ENCODE measurements at regions of chr20 and their contacts with region 1.

Region 1: DNA sequence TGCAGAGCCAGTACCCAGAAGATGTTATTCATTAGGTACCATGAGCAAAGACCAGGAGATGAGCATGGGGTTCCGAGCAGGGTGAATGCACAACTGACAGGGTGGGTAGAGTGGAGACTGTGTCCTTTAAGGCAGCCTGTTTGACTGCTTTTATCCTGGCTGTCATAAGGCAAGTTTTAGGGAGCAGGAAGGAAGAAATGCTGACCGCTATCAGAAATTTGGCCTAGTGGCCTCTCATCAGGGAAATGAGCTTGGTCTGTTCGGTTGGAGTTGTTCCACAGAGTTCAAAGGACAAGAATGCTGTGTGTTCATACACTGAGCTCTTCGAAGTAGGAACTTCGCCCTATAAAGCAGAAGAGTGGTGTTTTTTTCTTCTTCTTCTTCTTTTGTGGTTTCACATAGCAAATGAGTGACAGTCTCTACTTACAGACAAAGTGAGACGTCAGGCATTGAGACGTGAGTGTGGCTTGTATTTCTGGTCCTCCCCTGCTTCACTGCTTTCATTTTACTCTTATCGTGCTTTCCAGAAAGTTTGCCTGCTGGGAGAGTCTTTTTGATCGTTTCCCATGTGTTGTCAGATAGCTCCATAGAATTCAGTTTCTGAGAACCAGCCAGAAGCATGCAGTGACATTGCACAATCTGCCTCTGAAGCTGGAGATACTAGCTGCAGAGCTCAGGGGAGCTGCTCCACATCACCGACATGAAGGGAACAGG is at the start of gene CASS4:
- DNase-seq: peak in 23 of 35 experiments; percentile 19 to 75 (median 34)
- ATAC-seq: peak; percentile 79 to 90 (median 82)
- H3K4me3 ChIP-seq: peak within 1 kb of the TSS; percentile 48 to 57
- H3K4me3 Mint-ChIP-seq: peak within 1 kb of the TSS; percentile 80 to 90 (median 88)
- H3K27ac ChIP-seq: peak within 1 kb of the TSS; percentile 87
- H3K27ac Mint-ChIP-seq: peak within 1 kb of the TSS; percentile 92 to 93
- H3K4me1 ChIP-seq: peaks cover 25 to 38% of the 10 kb centered on the region in 2 experiments
- H3K4me1 Mint-ChIP-seq: peaks cover 55 to 64% (median 59%) of the 10 kb centered on the region in 3 donors
- H3K27me3 ChIP-seq: no peaks in the 10 kb centered on the region
- H3K27me3 Mint-ChIP-seq: no peaks in the 10 kb centered on the region
- total RNA-seq, gene CASS4: 8.0 to 13.8 (median 11.2) TPM

Region 2: DNA sequence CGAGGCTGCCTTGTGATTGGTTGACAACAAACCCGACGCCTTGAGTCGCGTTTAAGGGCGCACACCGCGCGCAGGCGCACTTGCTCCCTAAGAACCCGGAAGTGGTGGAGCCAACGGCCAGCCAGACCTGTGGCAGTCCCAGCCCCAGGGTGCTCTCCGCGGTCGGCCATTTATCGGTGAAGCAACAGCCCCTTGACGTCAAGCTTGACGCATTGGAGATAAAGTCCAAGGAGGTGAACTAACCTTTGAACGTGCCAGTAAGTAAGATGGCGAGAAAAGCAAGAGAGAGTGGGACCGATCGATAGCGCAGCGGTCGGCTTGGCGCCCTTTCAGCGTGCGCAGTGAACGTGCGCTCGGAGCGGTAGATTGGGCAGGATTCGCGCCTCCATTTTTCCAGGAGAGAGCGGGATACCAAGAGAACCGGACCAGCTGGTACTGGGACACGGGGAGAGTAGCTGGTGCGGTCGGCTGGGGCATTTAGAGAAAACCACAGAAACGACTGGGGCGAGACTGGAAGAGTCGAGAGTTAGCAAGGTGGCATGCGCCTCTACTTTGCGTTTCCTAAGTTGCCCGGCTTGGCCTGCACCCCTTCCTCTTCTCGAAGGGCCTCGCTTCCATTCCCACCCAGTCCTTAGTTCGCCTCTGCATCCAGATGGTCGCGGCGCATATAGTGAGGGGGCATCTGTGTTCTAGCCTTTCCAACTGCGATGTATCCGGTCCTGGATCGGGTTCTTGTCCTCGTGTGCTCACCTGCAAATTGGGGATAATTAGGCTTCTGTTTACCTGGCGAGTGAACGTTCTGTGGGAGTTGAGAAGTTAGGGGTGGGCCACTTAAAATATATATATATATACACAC is 19.4 kb before region 1 on chr20 and contains the start of gene CSTF1:
- CTCF ChIA-PET with region 1: interaction called in 1 of 2 experiments, 10 read pairs
- POLR2A ChIA-PET with region 1: interaction called, 9 to 12 read pairs
- DNase-seq: peak; percentile 98 to 100 (median 99)
- ATAC-seq: peak; percentile 87 to 91 (median 90)
- H3K4me3 ChIP-seq: peak within 1 kb of the TSS; percentile 66 to 97
- H3K4me3 Mint-ChIP-seq: no peak within 1 kb of the TSS
- H3K27ac ChIP-seq: peak within 1 kb of the TSS; percentile 89
- H3K27ac Mint-ChIP-seq: no peak within 1 kb of the TSS
- H3K4me1 ChIP-seq: peaks cover 14 to 20% of the 10 kb centered on the region in 2 experiments
- H3K4me1 Mint-ChIP-seq: peaks cover 19 to 28% (median 27%) of the 10 kb centered on the region in 3 donors
- H3K27me3 ChIP-seq: no peaks in the 10 kb centered on the region
- H3K27me3 Mint-ChIP-seq: no peaks in the 10 kb centered on the region
- total RNA-seq, gene CSTF1: 17.3 to 47.7 (median 41.9) TPM

Region 3: GRCh38 chr20:56422076-56422823 is 10.3 kb after region 1 on chr20:
- CTCF ChIA-PET with region 1: interaction called, 3 to 11 read pairs
- POLR2A ChIA-PET with region 1: interaction called, 12 to 16 read pairs
- DNase-seq: no peak
- ATAC-seq: no peak
- H3K4me3 ChIP-seq: no peak overlapping the region
- H3K4me3 Mint-ChIP-seq: peak overlapping the region; percentile 2 to 70 (median 13)
- H3K27ac ChIP-seq: peak overlapping the region; percentile 13
- H3K27ac Mint-ChIP-seq: peak overlapping the region; percentile 84 to 97
- H3K4me1 ChIP-seq: peaks cover 31 to 56% of the 10 kb centered on the region in 2 experiments
- H3K4me1 Mint-ChIP-seq: peaks cover 56 to 71% (median 64%) of the 10 kb centered on the region in 3 donors
- H3K27me3 ChIP-seq: no peaks in the 10 kb centered on the region
- H3K27me3 Mint-ChIP-seq: no peaks in the 10 kb centered on the region

Region 4: DNA sequence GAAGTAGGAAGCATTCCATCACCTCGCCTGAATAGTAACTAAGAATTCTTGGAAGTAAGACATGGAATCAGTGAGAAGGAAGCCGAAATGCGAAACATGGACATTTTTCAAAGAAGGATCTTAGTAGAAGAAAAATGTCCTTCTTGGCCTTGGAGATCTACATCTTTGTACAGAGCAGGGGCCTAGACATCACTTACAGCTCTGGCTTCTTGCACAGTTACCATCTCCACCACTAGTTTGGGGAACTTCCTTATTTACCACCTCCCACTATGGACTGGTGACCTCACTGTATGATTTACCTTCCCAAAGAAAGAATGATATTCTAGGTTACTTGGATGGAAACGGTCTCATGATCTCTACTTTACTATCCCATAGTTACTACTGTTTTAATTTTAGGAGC is 15.9 kb after region 1 on chr20:
- CTCF ChIA-PET with region 1: interaction called, 3 to 11 read pairs
- POLR2A ChIA-PET with region 1: interaction called, 12 to 16 read pairs
- DNase-seq: no peak
- ATAC-seq: no peak
- H3K4me3 ChIP-seq: no peak overlapping the region
- H3K4me3 Mint-ChIP-seq: peak overlapping the region in 1 of 3 donors; percentile 83
- H3K27ac ChIP-seq: no peak overlapping the region
- H3K27ac Mint-ChIP-seq: peak overlapping the region; percentile 98
- H3K4me1 ChIP-seq: peaks cover 14 to 29% of the 10 kb centered on the region in 2 experiments
- H3K4me1 Mint-ChIP-seq: peaks cover 47 to 67% (median 59%) of the 10 kb centered on the region in 3 donors
- H3K27me3 ChIP-seq: no peaks in the 10 kb centered on the region
- H3K27me3 Mint-ChIP-seq: no peaks in the 10 kb centered on the region

Region 5: DNA sequence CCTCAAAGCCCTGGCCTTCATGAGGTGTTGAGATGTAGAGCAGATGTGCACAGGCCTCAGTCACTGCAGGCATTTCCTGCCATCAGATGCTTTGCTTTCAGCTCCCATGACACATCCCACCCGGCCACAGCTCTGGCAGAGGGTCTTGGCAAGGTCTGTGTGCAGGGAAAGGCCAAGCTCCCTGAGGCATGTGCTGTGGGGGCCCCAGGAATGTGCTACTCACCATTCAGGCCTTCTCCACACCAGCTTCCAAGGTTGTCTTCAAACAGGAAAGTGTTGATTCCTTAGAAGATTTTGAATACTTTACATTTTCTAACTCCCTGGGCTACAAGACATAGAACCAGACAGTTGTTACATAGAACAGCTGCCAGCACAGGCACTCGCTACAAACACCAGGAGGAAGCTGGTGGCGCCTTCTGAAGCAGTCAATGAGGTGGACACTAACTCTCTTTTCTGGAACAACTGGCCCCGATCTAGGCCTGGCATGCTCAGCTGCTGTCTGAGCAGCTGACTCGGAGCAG is 27.9 kb after region 1 on chr20:
- CTCF ChIA-PET with region 1: interaction called in 1 of 2 experiments, 3 read pairs
- POLR2A ChIA-PET with region 1: interaction called in 1 of 2 experiments, 17 read pairs
- DNase-seq: peak in 2 of 35 experiments; percentile 23 to 29
- ATAC-seq: peak; percentile 31 to 64 (median 57)
- H3K4me3 ChIP-seq: no peak overlapping the region
- H3K4me3 Mint-ChIP-seq: peak overlapping the region; percentile 51 to 69 (median 67)
- H3K27ac ChIP-seq: peak overlapping the region; percentile 65
- H3K27ac Mint-ChIP-seq: peak overlapping the region; percentile 91 to 93
- H3K4me1 ChIP-seq: peaks cover 19 to 59% of the 10 kb centered on the region in 2 experiments
- H3K4me1 Mint-ChIP-seq: peaks cover 40 to 55% (median 43%) of the 10 kb centered on the region in 3 donors
- H3K27me3 ChIP-seq: no peaks in the 10 kb centered on the region
- H3K27me3 Mint-ChIP-seq: no peaks in the 10 kb centered on the region

Region 6: DNA sequence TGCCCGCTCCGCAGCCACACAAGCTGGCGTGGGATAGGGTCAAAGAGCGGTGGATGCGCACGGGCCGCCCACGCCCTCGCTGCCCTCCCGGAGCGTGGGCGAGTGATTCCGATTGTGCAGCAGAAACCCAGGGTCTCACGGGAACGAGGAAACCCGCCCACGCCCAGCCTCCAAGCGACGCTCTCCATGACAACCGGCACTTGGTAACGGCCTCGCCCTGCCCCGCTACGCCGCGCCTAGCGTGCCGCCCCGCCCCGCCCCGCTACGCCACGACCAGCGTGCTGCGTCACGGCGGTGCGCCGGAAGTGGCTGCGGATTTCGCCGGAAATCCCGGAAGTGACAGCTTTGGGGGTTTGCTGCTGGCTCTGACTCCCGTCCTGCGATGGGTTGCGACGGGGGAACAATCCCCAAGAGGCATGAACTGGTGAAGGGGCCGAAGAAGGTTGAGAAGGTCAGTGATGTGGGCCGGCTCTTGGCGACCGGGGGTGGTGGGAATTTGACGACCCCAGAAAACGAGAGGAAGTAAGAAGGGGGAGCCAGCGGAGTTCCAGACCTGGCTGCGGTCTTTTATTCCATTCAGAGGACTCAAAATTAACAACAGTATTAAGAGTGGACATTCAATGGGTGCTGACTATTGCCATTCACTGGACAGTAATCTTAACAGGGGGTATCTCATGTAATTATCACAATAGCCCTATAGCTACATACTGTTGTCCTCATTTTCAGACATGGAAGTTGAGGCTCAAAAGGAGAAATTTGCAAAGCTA is 56.6 kb after region 1 on chr20 and contains the start of gene RTF2:
- CTCF ChIA-PET with region 1: interaction called in 1 of 2 experiments, 11 read pairs
- POLR2A ChIA-PET with region 1: interaction called, 3 to 10 read pairs
- DNase-seq: peak; percentile 83 to 98 (median 93)
- ATAC-seq: peak; percentile 98 to 100 (median 99)
- H3K4me3 ChIP-seq: peak within 1 kb of the TSS; percentile 94
- H3K4me3 Mint-ChIP-seq: peak within 1 kb of the TSS; percentile 98 to 100 (median 99)
- H3K27ac ChIP-seq: peak within 1 kb of the TSS; percentile 93
- H3K27ac Mint-ChIP-seq: peak within 1 kb of the TSS; percentile 98 to 99
- H3K4me1 ChIP-seq: peaks cover 15 to 35% of the 10 kb centered on the region in 2 experiments
- H3K4me1 Mint-ChIP-seq: peaks cover 43 to 58% (median 43%) of the 10 kb centered on the region in 3 donors
- H3K27me3 ChIP-seq: no peaks in the 10 kb centered on the region
- H3K27me3 Mint-ChIP-seq: no peaks in the 10 kb centered on the region
- total RNA-seq, gene RTF2: 55.8 to 69.7 (median 64.8) TPM